Activated CD4-positive, alpha-beta memory T cell treated with anti-CD3 and anti-CD28 coated beads, Interleukin-2, amount 10 ng/mL, durations not matched to agents 7 days and 5 days (primary cell): ENCODE measurements at regions of chr9 and their contacts with region 1.

Region 1: GRCh38 chr9:133356391-133357091 is at the starts of genes SURF1 and SURF2:
- DNase-seq: peak; percentile 93
- H3K4me3 Mint-ChIP-seq: peak within 1 kb of the TSS; percentile 85
- H3K27ac Mint-ChIP-seq: peak within 1 kb of the TSS; percentile 83
- H3K4me1 Mint-ChIP-seq: peaks cover 53% of the 10 kb centered on the region
- H3K27me3 Mint-ChIP-seq: no peaks in the 10 kb centered on the region
- total RNA-seq, gene SURF1: 33.8 to 37.6 TPM
- total RNA-seq, gene SURF2: 10.2 TPM

Region 2: DNA sequence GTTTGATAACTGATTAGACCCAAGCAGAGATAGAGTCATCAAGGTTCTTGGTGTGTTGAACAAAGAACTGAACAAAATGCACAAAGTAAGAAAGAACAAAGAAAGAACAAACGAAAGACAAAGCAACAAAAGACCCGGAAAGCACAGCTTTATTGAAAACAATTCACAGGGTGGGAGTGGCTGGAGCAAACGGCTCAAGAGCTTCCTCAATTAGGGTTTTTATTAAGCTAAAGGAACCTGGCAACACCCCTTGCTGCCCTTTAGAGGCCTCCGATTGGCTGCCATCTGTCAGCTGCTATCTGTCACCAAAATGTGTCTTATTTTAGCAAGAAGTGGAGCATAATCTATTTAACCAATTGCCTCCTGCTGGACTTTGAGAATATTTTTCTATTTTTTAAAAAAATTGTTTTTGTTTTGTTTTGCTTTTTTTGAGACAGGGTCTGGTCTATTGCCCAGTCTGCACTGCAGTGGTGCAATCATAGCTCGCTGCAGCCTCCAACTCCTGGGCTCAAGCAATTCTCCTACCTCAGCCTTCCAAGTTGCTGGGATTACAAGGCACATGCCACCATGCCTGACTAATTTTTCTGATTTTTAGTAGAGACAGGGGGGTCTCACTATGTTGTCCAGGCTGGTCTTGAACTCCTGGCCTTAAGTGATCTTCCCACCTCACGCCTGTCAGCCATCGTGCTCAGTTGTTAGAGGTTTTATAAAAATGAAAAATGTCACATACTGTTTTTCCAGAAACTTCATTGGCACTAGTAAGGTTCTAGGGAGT is 73.9 kb before region 1 on chr9:
- CTCF ChIA-PET with region 1: no interaction called
- POLR2A ChIA-PET with region 1: no interaction called
- DNase-seq: no peak
- H3K4me3 Mint-ChIP-seq: no peak overlapping the region
- H3K27ac Mint-ChIP-seq: no peak overlapping the region
- H3K4me1 Mint-ChIP-seq: no peaks in the 10 kb centered on the region
- H3K27me3 Mint-ChIP-seq: peaks cover 13% of the 10 kb centered on the region

Region 3: DNA sequence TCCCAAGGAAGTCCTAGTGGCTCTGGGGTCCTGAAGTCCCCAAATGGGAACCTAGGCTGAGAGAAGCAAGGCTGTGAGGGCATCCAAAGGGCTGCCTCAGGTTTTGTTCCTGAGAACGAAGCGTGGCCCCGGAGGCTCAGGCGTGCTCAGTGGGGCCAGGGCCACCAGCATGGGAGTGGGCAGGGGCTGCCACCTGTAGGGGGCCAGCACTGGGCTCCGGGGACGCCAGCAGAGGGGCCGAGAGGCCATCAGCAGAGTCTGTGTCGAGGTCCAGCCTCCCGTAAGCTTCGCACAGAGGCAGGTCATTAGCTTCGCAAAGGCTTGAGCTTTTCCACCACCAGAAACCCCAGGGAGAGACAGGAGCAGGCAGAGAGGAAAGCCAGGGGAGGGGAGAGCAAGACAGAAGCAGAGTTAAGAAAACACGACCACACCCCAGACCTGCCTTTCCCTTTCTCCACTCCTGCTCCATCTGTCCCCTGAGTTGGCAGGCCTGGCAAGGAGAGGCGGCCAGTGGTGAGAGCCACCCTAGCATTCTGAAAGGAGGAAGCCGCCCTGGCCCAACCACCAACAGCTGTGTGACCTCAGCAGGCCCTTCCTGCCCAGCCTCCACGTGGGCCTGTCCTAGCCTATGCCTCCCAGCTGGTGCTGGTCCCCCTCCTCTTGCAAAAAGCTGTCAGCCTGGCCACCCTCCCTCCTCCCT is 15.0 kb before region 1 on chr9:
- CTCF ChIA-PET with region 1: interaction called, 7 read pairs
- POLR2A ChIA-PET with region 1: interaction called, 16 read pairs
- DNase-seq: no peak
- H3K4me3 Mint-ChIP-seq: no peak overlapping the region
- H3K27ac Mint-ChIP-seq: no peak overlapping the region
- H3K4me1 Mint-ChIP-seq: peaks cover 40% of the 10 kb centered on the region
- H3K27me3 Mint-ChIP-seq: no peaks in the 10 kb centered on the region

Region 4: GRCh38 chr9:133367778-133368177 is 11.2 kb after region 1 on chr9:
- CTCF ChIA-PET with region 1: interaction called, 59 read pairs
- POLR2A ChIA-PET with region 1: interaction called, 397 read pairs
- DNase-seq: no peak
- H3K4me3 Mint-ChIP-seq: no peak overlapping the region
- H3K27ac Mint-ChIP-seq: no peak overlapping the region
- H3K4me1 Mint-ChIP-seq: peaks cover 55% of the 10 kb centered on the region
- H3K27me3 Mint-ChIP-seq: no peaks in the 10 kb centered on the region

Region 5: DNA sequence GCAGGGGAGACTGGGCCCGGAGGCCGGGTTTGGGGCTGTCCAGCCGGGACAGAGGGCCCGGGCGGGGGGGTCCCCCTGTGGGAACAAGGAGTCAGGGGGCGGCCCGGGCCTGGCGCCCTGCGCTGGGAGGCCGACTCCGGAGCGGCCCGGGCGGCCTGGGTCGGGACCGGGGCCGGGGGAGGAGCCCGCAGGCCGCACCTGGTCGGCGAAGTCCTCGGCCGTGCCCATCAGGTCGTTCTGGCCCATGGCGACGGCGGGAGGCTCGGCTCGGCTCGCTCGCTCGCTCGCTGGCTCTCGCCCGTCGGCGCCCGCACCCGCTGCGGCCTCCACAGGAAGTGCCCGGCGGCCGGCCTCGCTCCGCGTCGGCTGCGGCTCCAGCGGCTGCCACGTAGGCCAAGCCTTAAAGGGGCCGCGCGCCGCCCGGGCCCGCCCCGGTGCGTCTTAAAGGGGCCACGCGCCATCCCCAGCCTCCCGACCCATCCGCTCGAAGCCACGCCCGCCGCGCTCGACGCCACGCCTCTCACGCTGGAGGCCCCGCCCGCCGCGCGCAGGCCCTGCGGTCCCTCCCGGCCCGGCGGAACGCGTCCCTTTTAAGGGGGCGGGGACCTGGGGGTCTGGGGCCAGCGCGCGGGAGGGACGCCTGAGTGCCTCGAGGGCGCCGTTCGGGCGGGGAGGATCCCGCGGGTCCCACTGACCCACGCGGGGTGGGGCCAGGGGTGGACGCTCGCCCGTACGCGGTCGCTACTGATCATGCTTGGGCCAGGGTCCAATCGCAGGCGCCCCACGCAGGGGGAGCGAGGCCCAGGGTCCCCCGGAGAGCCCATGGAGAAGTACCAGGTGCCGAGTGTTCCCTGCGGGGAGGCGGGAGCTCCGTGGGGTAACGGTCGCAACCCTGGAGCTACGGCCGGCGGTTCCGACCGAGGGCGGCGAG is 19.4 kb after region 1 on chr9 and contains the starts of genes STKLD1 and SURF4:
- CTCF ChIA-PET with region 1: interaction called, 59 read pairs
- POLR2A ChIA-PET with region 1: interaction called, 397 read pairs
- DNase-seq: peak; percentile 96
- H3K4me3 Mint-ChIP-seq: peak within 1 kb of the TSS; percentile 83
- H3K27ac Mint-ChIP-seq: peak within 1 kb of the TSS; percentile 97
- H3K4me1 Mint-ChIP-seq: peaks cover 36% of the 10 kb centered on the region
- H3K27me3 Mint-ChIP-seq: peaks cover 2% of the 10 kb centered on the region
- total RNA-seq, gene STKLD1: 0.65 to 0.71 TPM
- total RNA-seq, gene SURF4: 249 to 260 TPM

Region 6: GRCh38 chr9:133417541-133418461 is 61.3 kb after region 1 on chr9 and contains the start of gene REXO4:
- CTCF ChIA-PET with region 1: interaction called, 3 read pairs
- POLR2A ChIA-PET with region 1: interaction called, 10 read pairs
- DNase-seq: peak; percentile 89
- H3K4me3 Mint-ChIP-seq: peak within 1 kb of the TSS; percentile 92
- H3K27ac Mint-ChIP-seq: peak within 1 kb of the TSS; percentile 87
- H3K4me1 Mint-ChIP-seq: peaks cover 59% of the 10 kb centered on the region
- H3K27me3 Mint-ChIP-seq: no peaks in the 10 kb centered on the region
- total RNA-seq, gene REXO4: 19.7 to 21.7 TPM

Region 7: DNA sequence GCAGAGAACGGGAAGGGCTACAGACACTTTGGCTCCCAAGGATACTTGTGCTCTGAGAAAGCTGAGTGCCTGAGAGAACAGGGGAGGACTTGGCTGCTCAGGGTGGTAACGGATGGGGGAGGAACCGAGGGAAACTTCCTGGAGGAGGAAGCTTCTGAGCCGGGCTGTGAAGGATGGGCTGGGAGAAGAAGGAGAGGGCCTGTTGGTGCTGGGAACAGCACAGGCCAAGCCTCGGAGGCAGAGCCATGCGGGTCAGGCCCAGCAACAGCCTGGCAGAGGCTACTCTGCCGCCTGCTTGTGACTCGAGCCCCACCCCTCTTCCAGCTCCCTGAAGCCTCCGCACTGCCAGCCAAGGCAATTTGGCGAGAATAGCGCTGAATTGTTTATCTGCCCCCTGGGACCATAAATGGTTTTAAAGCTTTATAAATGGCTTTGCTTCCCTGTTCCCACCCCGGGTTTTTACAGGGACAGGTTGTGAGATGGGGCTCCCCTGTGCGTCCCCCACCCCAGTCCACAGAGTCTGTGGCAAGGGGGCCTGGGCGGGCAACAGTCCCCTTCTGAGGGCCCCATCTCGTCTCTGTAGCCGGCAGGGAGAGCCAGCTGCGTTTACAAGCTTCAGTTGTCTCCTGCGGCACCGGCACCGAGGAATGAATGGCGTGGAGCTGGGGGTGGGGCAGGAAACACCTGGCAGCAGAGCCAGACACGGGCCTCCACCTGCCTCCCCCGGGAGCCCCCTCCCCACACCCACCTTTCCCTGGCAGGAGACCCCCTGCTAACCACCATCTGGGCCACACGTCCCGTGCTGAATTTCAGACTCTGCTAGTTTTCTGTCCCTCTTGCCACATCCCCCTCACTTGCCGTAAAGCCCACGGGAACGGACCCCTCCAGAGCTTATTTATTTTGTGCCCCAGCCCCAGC is 228.3 kb after region 1 on chr9:
- CTCF ChIA-PET with region 1: no interaction called
- POLR2A ChIA-PET with region 1: no interaction called
- DNase-seq: no peak
- H3K4me3 Mint-ChIP-seq: no peak overlapping the region
- H3K27ac Mint-ChIP-seq: no peak overlapping the region
- H3K4me1 Mint-ChIP-seq: no peaks in the 10 kb centered on the region
- H3K27me3 Mint-ChIP-seq: peaks cover 29% of the 10 kb centered on the region